ENCODE measurements at regions of chr1 and their contacts with region 1.

Region 1: DNA sequence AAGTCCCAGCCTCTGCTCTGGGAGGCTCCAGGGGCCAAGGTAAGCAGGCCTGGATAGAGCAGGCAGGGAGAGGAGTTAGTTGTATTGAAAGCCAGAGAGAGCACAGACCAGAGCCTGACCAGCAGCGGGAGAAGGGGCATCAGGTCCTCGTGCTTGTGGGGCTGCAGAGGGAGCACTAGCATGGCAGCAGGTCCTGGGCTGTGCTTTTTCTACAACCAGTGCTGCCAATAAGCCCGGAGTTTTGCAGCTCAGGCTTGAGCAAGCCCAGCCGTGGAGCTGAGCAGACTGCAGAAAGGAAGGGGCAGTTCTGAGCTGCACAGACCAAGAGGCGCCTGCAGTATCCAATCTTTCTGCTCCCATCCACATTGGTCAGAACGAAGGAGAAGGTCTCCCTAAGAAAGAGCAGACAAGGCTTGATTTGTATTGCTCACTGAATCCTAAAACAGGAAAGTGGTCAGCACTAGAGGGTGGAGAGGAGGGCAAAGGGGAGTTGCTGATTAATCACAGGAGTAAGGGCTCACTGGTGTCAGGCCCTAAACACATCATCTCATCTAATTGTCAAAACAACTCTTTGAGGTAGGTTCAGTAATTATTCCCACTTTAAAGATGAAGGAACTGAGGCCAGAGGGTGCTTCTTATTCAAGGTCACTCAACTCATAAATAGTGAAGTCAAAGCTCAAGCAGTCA is 2.7 kb downstream of the DENND2D start:
- DNase-seq: no peak
- H3K4me3 Mint-ChIP-seq: peak overlapping the region; percentile 98
- H3K27ac Mint-ChIP-seq: peak overlapping the region; percentile 97
- H3K4me1 Mint-ChIP-seq: peaks cover 80% of the 10 kb centered on the region
- H3K27me3 Mint-ChIP-seq: no peaks in the 10 kb centered on the region

Region 2: DNA sequence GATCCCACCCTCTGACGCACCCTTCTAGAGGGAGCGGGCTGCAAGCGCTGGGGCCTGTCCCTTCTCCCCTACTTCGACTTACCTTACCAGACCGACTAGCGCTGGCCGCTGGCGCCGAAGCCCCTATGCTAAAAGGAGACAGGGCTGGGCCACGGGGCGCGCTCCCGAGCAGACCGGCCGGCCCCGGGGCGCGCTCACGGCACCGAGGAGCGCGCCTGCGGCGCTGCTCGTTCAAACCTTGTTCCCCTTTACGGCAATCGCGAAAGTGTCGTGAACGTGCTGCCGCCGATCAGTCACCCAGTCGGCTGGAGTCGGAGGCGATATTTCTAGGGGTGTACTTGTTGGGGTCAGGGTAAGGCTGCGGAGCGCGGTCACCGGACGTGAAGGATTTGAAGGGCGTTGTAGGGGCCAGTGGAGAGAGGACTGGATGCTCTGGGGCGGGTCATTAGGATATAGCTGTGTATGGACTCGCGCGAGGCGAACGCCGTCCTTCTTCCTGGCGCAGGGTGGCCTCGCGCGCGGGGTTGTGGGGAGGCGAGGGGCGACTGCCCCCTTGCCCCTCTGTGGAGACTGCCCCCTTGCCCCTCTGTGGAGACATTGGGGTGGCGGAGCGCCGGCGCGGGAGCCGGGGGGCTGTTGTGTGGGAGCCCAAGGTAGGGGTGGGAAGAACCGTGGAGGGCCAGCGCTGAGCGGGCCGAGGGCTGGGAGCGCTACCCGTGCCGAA is 57.6 kb before region 1 on chr1 and contains the starts of genes CEPT1 and DRAM2:
- intact Hi-C with region 1: loop called (anchors 2 kb)
- DNase-seq: peak; percentile 91
- H3K4me3 Mint-ChIP-seq: peak within 1 kb of the TSS; percentile 96
- H3K27ac Mint-ChIP-seq: peak within 1 kb of the TSS; percentile 92
- H3K4me1 Mint-ChIP-seq: peaks cover 36% of the 10 kb centered on the region
- H3K27me3 Mint-ChIP-seq: no peaks in the 10 kb centered on the region
- total RNA-seq, gene CEPT1: 29.8 and 34.8 TPM in 2 replicates
- total RNA-seq, gene DRAM2: 22.9 and 24.7 TPM in 2 replicates

Region 3: GRCh38 chr1:111214074-111214801 is 16.5 kb after region 1 on chr1:
- intact Hi-C with region 1: loop called (anchors 1 kb)
- DNase-seq: no peak
- H3K4me3 Mint-ChIP-seq: peak overlapping the region; percentile 53
- H3K27ac Mint-ChIP-seq: peak overlapping the region; percentile 91
- H3K4me1 Mint-ChIP-seq: peaks cover 79% of the 10 kb centered on the region
- H3K27me3 Mint-ChIP-seq: no peaks in the 10 kb centered on the region

Region 4: DNA sequence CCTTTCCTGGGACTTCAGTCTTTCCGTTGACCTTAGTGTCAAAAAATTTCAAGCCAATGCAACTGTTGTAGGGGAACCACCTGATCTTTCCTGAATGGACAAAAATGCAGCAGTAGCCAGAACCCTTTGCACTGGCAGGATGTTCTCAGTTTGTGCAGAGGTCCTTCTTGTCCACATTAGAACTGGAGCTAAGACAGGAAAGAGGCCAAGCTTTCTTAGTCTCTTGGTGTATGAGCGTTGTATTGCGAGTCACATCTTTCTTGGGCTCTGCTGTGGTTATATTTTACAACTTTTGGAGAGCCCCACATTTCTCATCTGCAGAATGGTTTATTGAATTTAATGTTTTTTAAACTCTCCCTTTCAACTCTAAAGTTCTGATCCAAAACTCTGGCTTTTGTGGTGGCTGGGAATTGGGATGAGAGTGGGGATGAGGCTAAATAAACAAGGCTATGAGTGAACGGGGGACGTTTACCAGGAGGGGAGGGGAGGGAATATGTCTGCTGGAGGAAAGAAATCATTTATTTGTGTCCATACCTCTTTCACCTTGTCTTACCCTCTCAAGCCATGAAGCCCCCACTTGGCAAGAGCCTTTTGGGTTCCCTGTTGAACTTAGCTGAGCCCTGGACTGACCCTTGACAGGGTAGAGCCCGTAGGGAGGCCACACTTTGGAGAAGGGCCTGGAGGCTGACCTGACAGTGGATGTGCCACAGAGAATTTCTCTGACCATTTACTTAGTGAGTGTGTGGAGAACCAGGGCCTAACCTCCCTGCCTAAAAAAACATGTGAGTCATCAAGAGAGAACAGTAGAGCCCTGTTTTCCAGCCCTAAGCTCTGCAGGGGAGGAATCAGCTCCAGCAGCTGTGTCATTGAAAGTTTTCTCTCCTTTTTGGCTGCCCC is 30.4 kb after region 1 on chr1:
- intact Hi-C with region 1: loop called (anchors 5 kb)
- DNase-seq: no peak
- H3K4me3 Mint-ChIP-seq: no peak overlapping the region
- H3K27ac Mint-ChIP-seq: no peak overlapping the region
- H3K4me1 Mint-ChIP-seq: peaks cover 62% of the 10 kb centered on the region
- H3K27me3 Mint-ChIP-seq: no peaks in the 10 kb centered on the region

Region 5: GRCh38 chr1:111318523-111318922 is 120.8 kb after region 1 on chr1:
- intact Hi-C with region 1: no loop called
- DNase-seq: no peak
- H3K4me3 Mint-ChIP-seq: no peak overlapping the region
- H3K27ac Mint-ChIP-seq: no peak overlapping the region
- H3K4me1 Mint-ChIP-seq: peaks cover 5% of the 10 kb centered on the region
- H3K27me3 Mint-ChIP-seq: peaks cover 18% of the 10 kb centered on the region